Common myeloid progenitor, CD34-positive (primary cell): ENCODE measurements at regions of chr9 and their contacts with region 1.

Region 1: DNA sequence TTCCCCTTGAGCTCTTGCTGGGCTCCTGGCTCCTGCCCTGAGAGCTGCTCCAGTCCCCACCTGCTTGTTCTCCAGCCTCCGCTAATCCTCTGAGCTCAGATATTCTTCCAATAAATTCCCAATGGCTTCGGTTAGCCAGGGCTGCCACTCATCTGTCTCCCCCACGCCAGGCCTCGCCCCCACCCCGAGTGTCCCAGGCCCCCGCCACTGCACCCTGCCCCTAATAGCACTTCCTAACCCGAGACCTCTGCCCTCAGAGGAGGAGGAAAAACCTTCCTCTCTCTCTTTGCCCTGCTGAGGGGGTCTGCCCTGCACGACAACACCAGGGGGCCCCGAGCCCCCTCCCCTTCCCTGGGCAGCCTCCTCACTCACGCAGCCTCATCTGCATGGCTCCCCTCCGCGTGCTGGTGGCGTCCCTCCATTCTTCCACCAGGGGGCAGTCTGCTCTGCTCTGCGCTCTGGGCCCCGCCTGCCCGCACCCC is 5.4 kb upstream of the LCN15 start:
- DNase-seq: peak; percentile 51 to 66 (median 64)
- H3K4me3 ChIP-seq: no peak overlapping the region
- H3K27ac ChIP-seq: no peak overlapping the region
- H3K4me1 ChIP-seq: peaks cover 0 to 8% (median 5%) of the 10 kb centered on the region in 4 experiments
- H3K27me3 ChIP-seq: no peaks in the 10 kb centered on the region

Region 2: GRCh38 chr9:136757328-136757727 is 12.4 kb before region 1 on chr9:
- CTCF ChIA-PET with region 1: interaction called, 12 read pairs
- POLR2A ChIA-PET with region 1: no interaction called
- DNase-seq: no peak
- H3K4me3 ChIP-seq: no peak overlapping the region
- H3K27ac ChIP-seq: no peak overlapping the region
- H3K4me1 ChIP-seq: peaks cover 0 to 17% (median 8%) of the 10 kb centered on the region in 4 experiments
- H3K27me3 ChIP-seq: no peaks in the 10 kb centered on the region

Region 3: DNA sequence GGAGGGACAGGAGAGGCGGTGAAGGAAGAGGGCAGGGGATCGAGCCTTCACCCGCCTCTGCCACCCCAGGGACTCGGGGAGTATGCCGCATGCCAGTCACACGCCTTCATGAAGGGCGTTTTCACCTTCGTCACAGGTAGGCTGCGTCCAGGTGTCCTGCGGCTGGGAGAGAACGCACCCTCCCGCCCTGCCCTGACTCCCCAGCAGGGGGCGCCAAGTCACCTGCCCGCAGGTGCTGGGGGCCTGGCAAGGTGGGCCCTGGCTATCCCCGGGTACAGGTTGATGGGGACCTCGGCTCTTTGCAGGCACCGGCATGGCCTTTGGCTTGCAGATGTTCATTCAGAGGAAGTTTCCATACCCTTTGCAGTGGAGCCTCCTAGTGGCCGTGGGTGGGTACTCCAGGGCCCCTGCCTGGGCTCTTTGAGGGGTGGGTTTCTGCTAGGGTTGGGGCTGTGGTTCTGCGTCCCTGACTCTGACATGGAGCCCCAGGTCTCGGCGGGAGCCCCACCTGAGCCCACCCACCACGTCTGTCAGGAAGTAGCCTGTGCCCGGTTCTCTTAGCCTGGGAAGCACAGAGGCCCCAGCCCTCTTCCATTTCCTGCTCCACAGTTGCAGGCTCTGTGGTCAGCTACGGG is 22.0 kb after region 1 on chr9:
- CTCF ChIA-PET with region 1: interaction called, 75 read pairs
- POLR2A ChIA-PET with region 1: no interaction called
- DNase-seq: peak; percentile 36 to 67 (median 65)
- H3K4me3 ChIP-seq: peak overlapping the region; percentile 45 to 91 (median 76)
- H3K27ac ChIP-seq: peak overlapping the region in 1 of 2 experiments; percentile 83
- H3K4me1 ChIP-seq: peaks cover 0 to 40% (median 24%) of the 10 kb centered on the region in 4 experiments
- H3K27me3 ChIP-seq: peaks cover 0 to 7% (median 0%) of the 10 kb centered on the region in 5 experiments

Region 4: GRCh38 chr9:136820971-136821825 is 51.4 kb after region 1 on chr9:
- CTCF ChIA-PET with region 1: no interaction called
- POLR2A ChIA-PET with region 1: no interaction called
- DNase-seq: peak in 2 of 3 donors; percentile 49 to 62
- H3K4me3 ChIP-seq: peak overlapping the region in 6 of 7 experiments; percentile 17 to 64 (median 52)
- H3K27ac ChIP-seq: no peak overlapping the region
- H3K4me1 ChIP-seq: peaks cover 0 to 10% (median 5%) of the 10 kb centered on the region in 4 experiments
- H3K27me3 ChIP-seq: peaks cover 0 to 8% (median 0%) of the 10 kb centered on the region in 5 experiments